HEK293 (cell line): ENCODE measurements at regions of chr7 and their contacts with region 1.

Region 1: DNA sequence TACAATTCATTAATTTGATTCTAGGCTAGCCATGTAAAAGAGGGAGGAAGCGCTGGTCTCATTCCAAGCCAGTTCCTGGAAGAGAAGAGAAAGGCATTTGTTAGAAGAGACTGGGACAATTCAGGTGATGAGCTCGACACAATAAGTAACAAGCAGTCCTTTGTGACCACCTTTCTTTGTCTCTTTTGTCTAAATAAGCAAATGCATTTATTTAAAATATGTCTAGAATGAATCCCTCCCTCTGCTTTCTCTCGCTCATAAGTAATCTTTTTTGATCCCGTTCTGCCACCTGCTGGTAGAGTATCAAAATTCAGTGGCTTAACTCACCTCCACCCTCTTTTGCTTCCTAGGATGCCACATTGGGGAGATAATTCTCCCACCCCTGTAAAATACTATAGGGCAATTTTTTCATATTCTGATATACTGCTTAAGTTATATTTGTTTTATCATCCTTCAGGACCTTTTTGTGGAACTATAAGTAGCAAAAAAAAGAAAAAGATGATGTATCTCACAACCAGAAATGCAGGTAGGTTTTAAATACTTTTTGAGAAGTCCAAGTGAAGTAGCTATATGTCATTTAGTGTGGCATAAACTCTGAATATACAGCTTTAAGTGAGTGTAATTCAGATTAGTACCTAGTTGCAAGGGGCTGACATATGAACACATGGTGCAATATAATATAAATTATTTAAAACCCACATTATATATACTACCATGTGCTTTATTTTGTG is 91.5 kb downstream of the GSDME start:
- H3K4me3 ChIP-seq: no peak overlapping the region
- H3K27ac ChIP-seq: no peak overlapping the region
- H3K4me1 ChIP-seq: no peaks in the 10 kb centered on the region
- CTCF ChIP-seq: no peak

Region 2: DNA sequence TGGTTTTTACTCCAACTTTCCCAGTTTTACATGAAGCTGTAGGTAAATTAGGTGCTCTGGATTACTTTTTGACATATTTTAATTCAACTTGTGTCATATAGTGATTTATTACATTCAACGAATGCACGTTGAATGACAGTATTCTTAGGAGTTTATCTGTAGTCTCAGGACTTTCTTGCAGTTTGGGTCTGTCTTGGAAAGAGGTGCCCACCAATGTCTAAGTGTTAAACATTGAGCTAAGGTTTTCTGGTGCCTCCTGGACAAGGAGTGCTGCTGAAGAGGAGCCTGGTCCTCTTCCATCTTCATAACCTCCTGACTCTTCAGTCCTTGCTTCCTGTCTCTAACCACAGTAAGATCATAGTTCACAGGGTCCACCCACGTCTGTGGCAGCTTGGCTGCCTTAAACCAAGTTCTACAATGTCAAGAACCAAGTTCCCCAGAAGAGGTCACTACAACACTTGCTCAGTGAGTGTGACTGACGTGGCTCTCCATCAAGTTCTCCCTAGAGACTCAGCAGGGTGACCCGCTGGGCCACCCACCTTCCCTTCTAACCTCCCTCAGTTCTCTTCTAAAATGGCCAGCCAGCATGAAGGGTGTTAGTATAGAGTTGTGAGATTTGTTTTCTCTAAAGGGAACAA is 375.6 kb before region 1 on chr7:
- CTCF ChIA-PET with region 1: interaction called, 20 read pairs
- POLR2A ChIA-PET with region 1: no interaction called
- H3K4me3 ChIP-seq: no peak overlapping the region
- H3K27ac ChIP-seq: no peak overlapping the region
- H3K4me1 ChIP-seq: no peaks in the 10 kb centered on the region
- CTCF ChIP-seq: peak; percentile 56; the same call in 1 of the 2 replicates